CD14-positive monocyte (primary cell): ENCODE measurements at regions of chr7 and their contacts with region 1.

Region 1: GRCh38 chr7:44748045-44748947 is at the start of gene ZMIZ2:
- DNase-seq: peak; percentile 81 to 89 (median 82)
- H3K4me3 ChIP-seq: peak within 1 kb of the TSS; percentile 83 to 98 (median 83)
- H3K4me3 Mint-ChIP-seq: peak within 1 kb of the TSS; percentile 86 to 93
- H3K27ac ChIP-seq: peak within 1 kb of the TSS; percentile 33 to 91
- H3K27ac Mint-ChIP-seq: peak within 1 kb of the TSS; percentile 59 to 94 (median 91)
- H3K4me1 ChIP-seq: peaks cover 31 to 34% of the 10 kb centered on the region in 2 donors
- H3K4me1 Mint-ChIP-seq: peaks cover 42% of the 10 kb centered on the region
- H3K27me3 ChIP-seq: no peaks in the 10 kb centered on the region
- H3K27me3 Mint-ChIP-seq: no peaks in the 10 kb centered on the region
- CTCF ChIP-seq: no peak
- polyA plus RNA-seq, gene ZMIZ2: 1.9 to 72.8 (median 3.3) TPM

Region 2: DNA sequence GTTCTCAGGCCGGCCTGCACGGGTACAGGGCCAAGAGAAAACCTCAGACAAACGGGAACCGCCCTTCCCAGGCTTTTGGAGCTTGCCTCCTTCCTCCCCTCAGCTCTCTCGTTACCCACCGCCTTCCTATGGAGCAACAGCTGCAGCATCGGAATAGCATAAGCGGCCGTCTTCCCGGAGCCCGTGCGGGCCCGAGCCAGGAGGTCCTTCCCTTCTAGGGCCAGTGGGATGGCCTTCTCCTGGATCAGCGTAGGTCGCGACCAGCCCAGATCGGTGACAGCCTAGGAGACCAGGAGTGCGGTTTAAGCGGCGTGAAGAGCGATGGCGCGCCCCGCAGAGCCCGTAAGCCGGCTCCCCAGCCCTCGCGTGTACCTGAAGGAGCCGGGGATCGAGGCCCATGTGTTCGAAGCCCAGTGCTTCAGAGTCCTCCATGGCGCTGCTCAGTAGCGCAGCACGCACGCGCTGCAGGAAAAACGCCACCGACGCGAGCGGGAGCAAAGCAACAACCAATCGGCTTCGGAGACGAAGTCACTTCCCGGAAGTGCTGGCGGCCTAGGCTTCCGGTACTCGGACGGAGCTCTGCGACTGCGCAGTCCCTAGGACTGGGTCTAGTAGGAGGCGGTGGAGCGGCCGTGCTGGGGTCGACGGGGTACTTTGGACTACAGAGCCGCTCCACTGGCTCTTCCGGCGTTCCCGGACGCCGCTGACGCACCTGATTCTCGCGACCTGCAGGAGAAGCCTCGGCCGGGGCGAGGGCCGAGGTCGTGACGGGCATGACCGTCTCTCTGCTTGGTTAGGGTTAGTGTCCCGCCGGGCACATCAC is 174.6 kb before region 1 on chr7 and contains the start of gene DDX56:
- intact Hi-C with region 1: loop called in 1 of 2 experiments (anchors 5 kb)
- DNase-seq: peak; percentile 93 to 99 (median 93)
- H3K4me3 ChIP-seq: peak within 1 kb of the TSS; percentile 65 to 88 (median 80)
- H3K4me3 Mint-ChIP-seq: peak within 1 kb of the TSS; percentile 93 to 98
- H3K27ac ChIP-seq: peak within 1 kb of the TSS; percentile 75 to 97
- H3K27ac Mint-ChIP-seq: peak within 1 kb of the TSS; percentile 95 to 99 (median 97)
- H3K4me1 ChIP-seq: peaks cover 20 to 23% of the 10 kb centered on the region in 2 donors
- H3K4me1 Mint-ChIP-seq: peaks cover 26% of the 10 kb centered on the region
- H3K27me3 ChIP-seq: no peaks in the 10 kb centered on the region
- H3K27me3 Mint-ChIP-seq: no peaks in the 10 kb centered on the region
- CTCF ChIP-seq: no peak
- polyA plus RNA-seq, gene DDX56: 32.2 to 69.3 (median 33.9) TPM

Region 3: GRCh38 chr7:44587843-44588711 is 160.2 kb before region 1 on chr7:
- intact Hi-C with region 1: loop called (anchors 5 kb)
- DNase-seq: peak; percentile 46 to 58 (median 55)
- H3K4me3 ChIP-seq: no peak overlapping the region
- H3K4me3 Mint-ChIP-seq: no peak overlapping the region
- H3K27ac ChIP-seq: no peak overlapping the region
- H3K27ac Mint-ChIP-seq: peak overlapping the region in 3 of 7 donors; percentile 21 to 26 (median 26)
- H3K4me1 ChIP-seq: peaks cover 2% of the 10 kb centered on the region in 2 donors
- H3K4me1 Mint-ChIP-seq: peaks cover 6% of the 10 kb centered on the region
- H3K27me3 ChIP-seq: no peaks in the 10 kb centered on the region
- H3K27me3 Mint-ChIP-seq: peaks cover 1 to 4% (median 3%) of the 10 kb centered on the region in 3 donors
- CTCF ChIP-seq: peak; percentile 81

Region 4: GRCh38 chr7:44706788-44707560 is 41.3 kb before region 1 on chr7:
- intact Hi-C with region 1: loop called in 1 of 2 experiments (anchors 10 kb)
- DNase-seq: no peak
- H3K4me3 ChIP-seq: no peak overlapping the region
- H3K4me3 Mint-ChIP-seq: no peak overlapping the region
- H3K27ac ChIP-seq: peak overlapping the region in 1 of 2 donors; percentile 36
- H3K27ac Mint-ChIP-seq: peak overlapping the region in 3 of 7 donors; percentile 35 to 68 (median 37)
- H3K4me1 ChIP-seq: no peaks in the 10 kb centered on the region
- H3K4me1 Mint-ChIP-seq: no peaks in the 10 kb centered on the region
- H3K27me3 ChIP-seq: no peaks in the 10 kb centered on the region
- H3K27me3 Mint-ChIP-seq: peaks cover 0 to 2% (median under 1%) of the 10 kb centered on the region in 3 donors
- CTCF ChIP-seq: no peak

Region 5: GRCh38 chr7:44797329-44798251 is 49.3 kb after region 1 on chr7:
- intact Hi-C with region 1: loop called (anchors 5 kb)
- DNase-seq: peak; percentile 78 to 86 (median 80)
- H3K4me3 ChIP-seq: peak overlapping the region; percentile 70 to 85 (median 82)
- H3K4me3 Mint-ChIP-seq: peak overlapping the region; percentile 92 to 96
- H3K27ac ChIP-seq: peak overlapping the region; percentile 94 to 95
- H3K27ac Mint-ChIP-seq: peak overlapping the region; percentile 97 to 99 (median 98)
- H3K4me1 ChIP-seq: peaks cover 23 to 30% of the 10 kb centered on the region in 2 donors
- H3K4me1 Mint-ChIP-seq: peaks cover 19% of the 10 kb centered on the region
- H3K27me3 ChIP-seq: no peaks in the 10 kb centered on the region
- H3K27me3 Mint-ChIP-seq: peaks cover 0 to 1% (median 0%) of the 10 kb centered on the region in 3 donors
- CTCF ChIP-seq: peak; percentile 63

Region 6: DNA sequence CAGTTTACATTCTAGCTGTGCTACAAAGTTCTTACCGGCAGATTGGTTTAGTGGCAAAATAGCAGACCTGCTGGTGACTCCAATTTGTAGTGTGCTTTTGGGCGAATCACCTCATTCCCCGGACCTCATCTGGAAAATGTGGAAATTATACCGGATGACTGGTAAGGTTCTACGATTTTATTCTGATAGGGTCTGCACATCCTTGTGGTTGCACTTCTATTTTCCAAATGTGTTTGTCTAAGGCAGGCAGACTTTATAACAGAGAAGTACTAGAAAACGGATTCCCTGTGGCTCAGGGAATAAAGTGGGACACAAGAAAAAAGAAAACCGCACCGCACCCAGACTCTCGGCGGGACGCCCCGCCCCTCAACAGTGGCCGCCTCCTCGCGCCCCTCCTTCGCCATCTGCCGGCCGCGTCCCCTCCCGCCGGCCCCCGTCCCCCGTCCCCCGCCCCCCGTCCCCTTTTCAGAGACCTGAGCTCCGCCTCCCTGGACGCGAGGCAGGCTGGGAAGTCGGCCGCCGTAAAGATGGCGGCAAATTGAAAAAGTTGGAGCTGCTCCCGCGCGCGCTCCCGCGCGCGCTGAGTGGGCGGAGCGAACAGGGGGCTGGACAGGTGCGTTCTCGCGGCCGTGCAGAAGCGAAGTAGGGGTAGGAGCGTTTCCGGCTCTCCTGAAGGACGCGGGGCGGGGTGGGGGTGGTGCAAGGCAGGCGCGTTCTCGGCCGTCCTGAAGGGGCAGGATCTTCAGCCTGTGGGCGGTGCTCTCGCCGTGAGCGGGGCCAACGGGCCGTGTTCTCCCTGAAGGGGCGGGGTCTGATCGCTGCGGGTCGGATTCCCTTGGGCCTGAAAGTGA is 251.2 kb after region 1 on chr7:
- intact Hi-C with region 1: loop called (anchors 5 to 10 kb)
- DNase-seq: peak; percentile 94 to 98 (median 97)
- H3K4me3 ChIP-seq: peak overlapping the region; percentile 48 to 88 (median 83)
- H3K4me3 Mint-ChIP-seq: peak overlapping the region; percentile 97 to 98
- H3K27ac ChIP-seq: peak overlapping the region; percentile 75 to 86
- H3K27ac Mint-ChIP-seq: peak overlapping the region; percentile 91 to 99 (median 98)
- H3K4me1 ChIP-seq: peaks cover 21 to 34% of the 10 kb centered on the region in 2 donors
- H3K4me1 Mint-ChIP-seq: peaks cover 33% of the 10 kb centered on the region
- H3K27me3 ChIP-seq: no peaks in the 10 kb centered on the region
- H3K27me3 Mint-ChIP-seq: no peaks in the 10 kb centered on the region
- CTCF ChIP-seq: no peak